ENCODE measurements at regions of chr12 and their contacts with region 1.

Region 1: DNA sequence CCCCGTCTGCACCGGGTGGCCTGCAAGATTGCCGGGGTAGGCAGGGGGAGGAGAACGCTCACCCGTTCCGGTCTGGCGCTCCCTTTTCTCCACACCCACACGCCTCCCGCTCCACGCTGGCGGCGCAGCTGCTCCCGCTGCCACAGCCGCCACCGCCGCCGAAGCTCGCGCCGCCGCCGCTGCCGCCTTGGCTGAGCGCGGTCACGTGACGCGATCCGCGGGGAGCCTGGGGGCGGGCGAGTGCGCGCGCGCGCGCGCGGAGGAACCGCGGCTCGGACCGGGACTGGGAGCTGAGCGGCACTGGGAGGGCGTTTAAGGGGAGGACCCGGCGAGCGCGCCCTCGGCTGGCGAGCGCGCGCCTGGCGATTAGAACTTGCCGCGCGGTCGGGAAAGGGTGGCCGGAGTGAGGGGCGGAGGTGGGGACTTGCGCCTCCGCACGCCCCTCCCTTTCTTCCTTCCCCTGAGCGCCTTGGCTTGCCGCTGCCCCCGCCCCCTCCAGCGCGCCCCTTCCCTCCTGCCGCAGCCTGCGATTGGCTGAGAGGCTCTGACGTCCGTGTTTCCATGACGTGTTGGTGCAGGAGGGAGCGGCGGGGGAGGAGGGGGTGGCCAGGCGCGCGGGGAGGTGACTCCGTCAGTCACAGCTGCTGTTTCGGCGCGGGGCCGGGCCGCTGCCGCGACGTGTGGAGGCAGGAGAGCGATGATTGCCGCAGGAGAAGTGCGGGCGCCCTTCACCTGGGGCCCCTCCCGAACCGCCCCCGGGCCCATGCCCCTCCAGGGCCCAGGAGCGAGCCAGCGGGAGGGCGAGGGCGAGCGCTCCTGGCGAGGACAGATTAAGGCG is 738 bp upstream of the ATP2B1 start:
- DNase-seq: peak; percentile 95
- ATAC-seq: peak; percentile 76
- H3K4me3 ChIP-seq: peak overlapping the region; percentile 94
- H3K27ac ChIP-seq: peak overlapping the region; percentile 95
- H3K4me1 ChIP-seq: peaks cover 3% of the 10 kb centered on the region; the same call in 1 of the 2 replicates
- H3K27me3 ChIP-seq: no peaks in the 10 kb centered on the region
- CTCF ChIP-seq: 0 out of 6 replicates have a peak, but pooled peaks of 1 of the 3 experiments have one; percentile 10
- EP300 ChIP-seq: peak in 1 of 2 experiments; percentile 41; a peak in 3 of 4 replicates
- POLR2A ChIP-seq: peak; percentile 96
- RAD21 ChIP-seq: 0 out of 2 replicates have a peak, but pooled peaks have one; percentile 0

Region 2: GRCh38 chr12:89345830-89346740 is 363.3 kb before region 1 on chr12:
- CTCF ChIA-PET with region 1: no interaction called
- POLR2A ChIA-PET with region 1: no interaction called
- RAD21 ChIA-PET with region 1: no interaction called
- SMC1A ChIA-PET with region 1: no interaction called
- in situ Hi-C with region 1: no loop called
- intact Hi-C with region 1: no loop called
- DNase-seq: peak; percentile 88
- ATAC-seq: peak; percentile 98
- H3K4me3 ChIP-seq: no peak overlapping the region
- H3K27ac ChIP-seq: no peak overlapping the region
- H3K4me1 ChIP-seq: peaks cover 18% of the 10 kb centered on the region
- H3K27me3 ChIP-seq: peaks cover 13 to 21% of the 10 kb centered on the region in 2 experiments
- CTCF ChIP-seq: no peak
- EP300 ChIP-seq: peak; percentile 24 to 52; a peak in 2 of 4 replicates
- POLR2A ChIP-seq: no peak
- RAD21 ChIP-seq: 0 out of 2 replicates have a peak, but pooled peaks have one; percentile 8

Region 3: DNA sequence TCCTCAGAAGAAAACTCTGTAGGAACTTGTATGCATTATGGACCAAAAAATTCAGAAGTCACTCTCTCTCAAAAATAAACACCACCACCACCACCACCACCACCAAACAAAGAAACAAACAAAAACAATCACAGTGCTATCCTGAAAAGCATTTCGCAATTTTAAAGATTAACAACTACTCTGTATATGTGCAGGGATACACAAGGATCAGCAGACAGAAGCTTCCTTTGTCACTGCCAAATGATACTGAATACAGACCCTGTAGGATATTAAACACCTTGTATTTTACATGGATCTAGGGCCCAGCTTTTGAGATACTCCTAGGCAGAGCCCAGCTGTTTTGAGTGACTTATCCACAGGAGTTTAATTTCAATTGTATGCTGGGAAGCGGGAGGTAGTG is 32.4 kb before region 1 on chr12:
- CTCF ChIA-PET with region 1: interaction called, 10 read pairs
- POLR2A ChIA-PET with region 1: interaction called, 3 read pairs
- RAD21 ChIA-PET with region 1: interaction called, 5 read pairs
- SMC1A ChIA-PET with region 1: interaction called, 5 read pairs
- in situ Hi-C with region 1: no loop called
- intact Hi-C with region 1: no loop called
- DNase-seq: no peak
- ATAC-seq: no peak; the same call in 2 of the 3 replicates
- H3K4me3 ChIP-seq: no peak overlapping the region
- H3K27ac ChIP-seq: no peak overlapping the region
- H3K4me1 ChIP-seq: peaks cover 6% of the 10 kb centered on the region; the same call in 1 of the 2 replicates
- H3K27me3 ChIP-seq: no peaks in the 10 kb centered on the region
- CTCF ChIP-seq: no peak
- EP300 ChIP-seq: no peak
- POLR2A ChIP-seq: no peak
- RAD21 ChIP-seq: no peak

Region 4: GRCh38 chr12:89756585-89757321 is 47.4 kb after region 1 on chr12:
- CTCF ChIA-PET with region 1: interaction called, 4 read pairs
- POLR2A ChIA-PET with region 1: interaction called, 14 read pairs
- RAD21 ChIA-PET with region 1: interaction called, 41 read pairs
- SMC1A ChIA-PET with region 1: interaction called, 22 read pairs
- in situ Hi-C with region 1: no loop called
- intact Hi-C with region 1: loop called (anchors 1 kb)
- DNase-seq: peak; percentile 97
- ATAC-seq: peak; percentile 89
- H3K4me3 ChIP-seq: no peak overlapping the region
- H3K27ac ChIP-seq: peak overlapping the region; percentile 90
- H3K4me1 ChIP-seq: peaks cover 44% of the 10 kb centered on the region
- H3K27me3 ChIP-seq: no peaks in the 10 kb centered on the region
- CTCF ChIP-seq: no peak
- EP300 ChIP-seq: peak; percentile 97 to 98
- POLR2A ChIP-seq: no peak
- RAD21 ChIP-seq: no peak

Region 5: GRCh38 chr12:89862511-89863179 is 153.3 kb after region 1 on chr12:
- CTCF ChIA-PET with region 1: interaction called, 6 read pairs
- POLR2A ChIA-PET with region 1: interaction called, 11 read pairs
- RAD21 ChIA-PET with region 1: interaction called, 13 read pairs
- SMC1A ChIA-PET with region 1: interaction called, 5 read pairs
- in situ Hi-C with region 1: no loop called
- intact Hi-C with region 1: no loop called
- DNase-seq: peak; percentile 79
- ATAC-seq: peak; percentile 75
- H3K4me3 ChIP-seq: peak overlapping the region; percentile 60
- H3K27ac ChIP-seq: peak overlapping the region; percentile 89
- H3K4me1 ChIP-seq: peaks cover 39% of the 10 kb centered on the region
- H3K27me3 ChIP-seq: no peaks in the 10 kb centered on the region
- CTCF ChIP-seq: no peak
- EP300 ChIP-seq: peak in 1 of 2 experiments; percentile 17; a peak in 1 of 4 replicates
- POLR2A ChIP-seq: peak; percentile 58
- RAD21 ChIP-seq: 0 out of 2 replicates have a peak, but pooled peaks have one; percentile 19

Region 6: GRCh38 chr12:89949457-89950195 is 240.2 kb after region 1 on chr12:
- CTCF ChIA-PET with region 1: interaction called, 6 read pairs
- POLR2A ChIA-PET with region 1: interaction called, 8 read pairs
- RAD21 ChIA-PET with region 1: interaction called, 7 read pairs
- SMC1A ChIA-PET with region 1: interaction called, 20 read pairs
- in situ Hi-C with region 1: no loop called
- intact Hi-C with region 1: no loop called
- DNase-seq: peak; percentile 83
- ATAC-seq: peak; percentile 87
- H3K4me3 ChIP-seq: peak overlapping the region; percentile 33; the same call in 1 of the 2 replicates
- H3K27ac ChIP-seq: peak overlapping the region; percentile 83; the same call in 1 of the 2 replicates
- H3K4me1 ChIP-seq: peaks cover 15% of the 10 kb centered on the region; the same call in 1 of the 2 replicates
- H3K27me3 ChIP-seq: no peaks in the 10 kb centered on the region
- CTCF ChIP-seq: peak; percentile 31 to 63 (median 35); a peak in 5 of 6 replicates
- EP300 ChIP-seq: peak; percentile 86 to 96; a peak in 3 of 4 replicates
- POLR2A ChIP-seq: no peak
- RAD21 ChIP-seq: peak; percentile 71

Region 7: GRCh38 chr12:90102957-90103652 is 393.7 kb after region 1 on chr12:
- CTCF ChIA-PET with region 1: interaction called, 3 read pairs
- POLR2A ChIA-PET with region 1: interaction called, 3 read pairs
- RAD21 ChIA-PET with region 1: interaction called, 4 read pairs
- SMC1A ChIA-PET with region 1: interaction called, 5 read pairs
- in situ Hi-C with region 1: no loop called
- intact Hi-C with region 1: loop called (anchors 5 kb)
- DNase-seq: peak; percentile 24
- ATAC-seq: peak; percentile 98
- H3K4me3 ChIP-seq: no peak overlapping the region
- H3K27ac ChIP-seq: no peak overlapping the region
- H3K4me1 ChIP-seq: no peaks in the 10 kb centered on the region
- H3K27me3 ChIP-seq: no peaks in the 10 kb centered on the region
- CTCF ChIP-seq: peak; percentile 56 to 62 (median 57)
- EP300 ChIP-seq: no peak
- POLR2A ChIP-seq: no peak
- RAD21 ChIP-seq: peak; percentile 63